Sciatic nerve (tissue), 2 donors: ENCODE measurements at regions of chr3 and their contacts with region 1.

Region 1: GRCh38 chr3:161404811-161405777 is 33.8 kb upstream of the SPTSSB start:
- DNase-seq: no peak
- ATAC-seq: no peak

Region 2: DNA sequence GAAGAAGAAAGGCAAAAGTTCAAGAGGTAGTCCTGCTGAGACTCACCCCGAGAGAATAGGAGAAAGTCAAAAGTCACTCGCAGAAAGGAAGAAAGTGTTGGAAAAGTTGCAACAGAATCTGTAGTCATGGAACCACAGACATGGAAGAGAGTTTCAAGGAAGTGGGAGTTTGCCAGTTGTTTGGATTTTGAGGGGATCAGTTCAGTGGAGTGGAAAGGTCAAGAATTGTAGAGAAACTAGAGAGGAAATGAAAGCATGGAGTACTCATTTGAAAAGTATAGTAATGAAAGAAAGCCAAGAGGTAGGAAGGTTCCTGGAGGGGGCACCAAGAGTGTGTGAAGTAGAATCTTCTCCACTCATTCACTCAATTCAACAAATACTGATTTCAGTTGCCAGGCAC is 68.4 kb before region 1 on chr3:
- intact Hi-C with region 1: no loop called
- DNase-seq: no peak
- ATAC-seq: no peak

Region 3: DNA sequence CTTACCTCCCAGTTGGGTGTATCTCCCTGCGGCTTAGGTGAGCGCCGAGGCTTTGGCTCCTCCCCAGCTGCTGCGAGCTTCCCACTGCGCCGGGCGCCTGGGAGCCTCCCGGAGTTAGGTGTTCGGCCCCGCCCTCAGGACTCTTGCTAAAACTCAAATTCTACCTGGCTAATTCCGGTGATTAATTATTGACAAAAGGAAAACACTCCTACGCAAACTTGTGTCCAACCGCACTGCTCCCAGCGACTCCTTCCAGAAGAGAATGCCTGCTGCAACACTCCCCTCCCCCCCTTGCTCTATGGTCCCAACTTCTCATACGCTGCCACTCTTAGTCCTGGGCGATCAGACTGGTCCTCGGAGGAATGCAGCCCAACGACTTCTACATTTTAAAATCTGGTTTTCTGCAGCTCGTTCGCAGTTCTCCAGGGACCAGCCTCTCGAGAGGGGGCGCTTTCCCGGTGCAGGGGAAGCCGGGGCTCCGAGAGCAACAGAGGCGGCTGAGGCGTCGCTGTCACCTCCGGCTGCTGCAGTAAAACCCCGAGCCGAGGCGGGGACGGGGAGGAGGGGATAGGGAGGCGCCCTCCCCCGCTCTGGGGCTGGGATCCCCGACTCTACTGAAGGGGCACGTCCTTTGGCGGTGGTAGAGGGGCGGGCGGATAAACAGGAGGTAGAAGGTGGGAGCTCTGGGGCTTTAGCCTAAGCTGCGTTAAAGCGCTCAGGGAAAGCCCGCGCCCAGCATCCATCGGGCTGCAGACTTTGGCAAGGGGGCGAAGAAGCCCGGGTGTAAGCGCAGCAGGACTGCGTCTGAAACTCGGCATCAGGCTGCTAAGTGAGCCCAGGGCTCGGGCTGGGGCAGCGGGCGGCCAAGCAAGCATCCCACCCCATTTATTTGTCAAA is 33.4 kb before region 1 on chr3 and contains the start of gene SPTSSB:
- intact Hi-C with region 1: loop called (anchors 2 kb)
- DNase-seq: peak; percentile 58
- ATAC-seq: peak; percentile 77
- total RNA-seq, gene SPTSSB: 0.40 TPM